Adrenal gland (tissue), 19 donors: ENCODE measurements at regions of chr2 and their contacts with region 1.

Region 1: GRCh38 chr2:203446071-203446481 is 89.0 kb downstream of the RAPH1 start:
- DNase-seq: no peak
- H3K4me3 ChIP-seq: no peak overlapping the region
- H3K27ac ChIP-seq: no peak overlapping the region
- H3K4me1 ChIP-seq: peaks cover 0 to 2% of the 10 kb centered on the region in 2 donors
- H3K27me3 ChIP-seq: no peaks in the 10 kb centered on the region
- CTCF ChIP-seq: no peak
- POLR2A ChIP-seq: no peak

Region 2: GRCh38 chr2:203209538-203209937 is 236.5 kb before region 1 on chr2:
- intact Hi-C with region 1: no loop called
- DNase-seq: no peak
- H3K4me3 ChIP-seq: no peak overlapping the region
- H3K27ac ChIP-seq: no peak overlapping the region
- H3K4me1 ChIP-seq: no peaks in the 10 kb centered on the region
- H3K27me3 ChIP-seq: no peaks in the 10 kb centered on the region
- CTCF ChIP-seq: no peak
- POLR2A ChIP-seq: no peak

Region 3: GRCh38 chr2:203238704-203239526 is 207.2 kb before region 1 on chr2 and contains the start of gene CYP20A1:
- intact Hi-C with region 1: loop called in 1 of 2 experiments (anchors 10 kb)
- DNase-seq: peak; percentile 96 to 98 (median 97)
- H3K4me3 ChIP-seq: peak within 1 kb of the TSS; percentile 59 to 74 (median 72)
- H3K27ac ChIP-seq: peak within 1 kb of the TSS; percentile 93 to 98 (median 94)
- H3K4me1 ChIP-seq: peaks cover 10 to 27% of the 10 kb centered on the region in 2 donors
- H3K27me3 ChIP-seq: no peaks in the 10 kb centered on the region
- CTCF ChIP-seq: peak in 5 of 6 experiments; percentile 28 to 46 (median 33)
- POLR2A ChIP-seq: peak; percentile 60 to 92
- total RNA-seq, gene CYP20A1: 25.9 to 70.9 (median 45.4) TPM

Region 4: DNA sequence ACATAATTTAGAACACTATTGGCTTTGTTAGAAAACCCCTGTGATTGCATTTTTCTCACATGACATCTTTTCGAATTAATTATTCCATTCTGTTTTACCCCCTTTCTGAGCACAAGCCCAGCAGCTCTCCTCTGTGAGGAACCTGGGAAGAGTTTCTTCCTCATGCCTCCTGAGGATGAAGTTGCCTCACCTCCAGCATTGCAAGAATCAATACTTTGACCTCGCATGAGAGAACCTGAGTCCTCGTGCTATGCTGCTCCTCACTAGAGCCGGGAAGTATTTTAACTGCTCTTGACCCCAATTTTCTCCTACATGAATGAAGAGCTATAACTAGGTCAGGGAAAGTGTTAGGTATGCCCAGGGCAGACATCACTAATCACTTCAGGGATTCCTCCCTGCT is 166.2 kb after region 1 on chr2:
- intact Hi-C with region 1: no loop called
- DNase-seq: no peak
- H3K4me3 ChIP-seq: no peak overlapping the region
- H3K27ac ChIP-seq: no peak overlapping the region
- H3K4me1 ChIP-seq: no peaks in the 10 kb centered on the region
- H3K27me3 ChIP-seq: no peaks in the 10 kb centered on the region
- CTCF ChIP-seq: no peak
- POLR2A ChIP-seq: no peak

Region 5: GRCh38 chr2:203928849-203929248 is 482.8 kb after region 1 on chr2:
- intact Hi-C with region 1: no loop called
- DNase-seq: no peak
- H3K4me3 ChIP-seq: no peak overlapping the region
- H3K27ac ChIP-seq: no peak overlapping the region
- H3K4me1 ChIP-seq: no peaks in the 10 kb centered on the region
- H3K27me3 ChIP-seq: no peaks in the 10 kb centered on the region
- CTCF ChIP-seq: peak in 2 of 6 experiments; percentile 29 to 35
- POLR2A ChIP-seq: no peak